HAP-1 (cell line): ENCODE measurements at regions of chr19 and their contacts with region 1.

Region 1: DNA sequence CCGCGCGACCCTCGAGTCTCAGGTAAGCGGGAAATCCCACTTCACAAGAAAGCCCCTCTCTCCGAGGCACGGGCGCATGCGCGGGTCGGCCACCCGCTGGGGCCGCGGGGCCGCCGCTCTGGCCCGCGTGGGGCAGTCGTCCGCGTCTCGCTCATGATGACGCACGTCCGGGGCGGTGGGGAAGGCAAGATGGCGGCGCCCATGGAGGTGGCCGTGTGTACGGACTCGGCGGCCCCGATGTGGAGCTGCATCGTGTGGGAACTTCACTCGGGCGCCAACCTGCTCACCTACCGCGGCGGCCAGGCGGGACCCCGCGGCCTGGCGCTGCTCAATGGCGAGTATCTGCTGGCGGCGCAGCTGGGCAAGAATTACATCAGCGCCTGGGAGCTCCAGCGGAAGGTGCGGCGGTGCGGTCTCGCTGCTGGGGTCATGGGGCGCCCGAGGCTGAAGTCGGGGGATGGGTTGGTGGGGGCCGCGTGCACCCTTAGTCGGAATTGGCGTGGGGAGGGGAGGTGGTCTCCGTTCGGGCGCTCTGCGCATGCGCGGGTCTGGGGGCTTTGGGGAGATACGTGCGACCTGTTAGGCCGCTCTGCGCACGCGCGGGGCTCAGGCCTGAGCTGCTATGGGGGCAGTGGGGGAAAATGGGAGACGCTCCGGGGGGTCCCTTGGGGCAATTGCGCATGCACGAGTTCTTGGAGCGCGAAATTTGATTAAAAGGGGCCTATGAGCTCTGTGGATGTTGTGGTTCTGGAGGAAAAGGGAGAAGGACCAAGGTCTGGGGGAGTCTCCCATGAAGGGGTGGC is at the start of gene WDR18:
- DNase-seq: peak; percentile 84 to 95
- H3K4me3 ChIP-seq: peak within 1 kb of the TSS; percentile 97
- H3K4me1 ChIP-seq: peaks cover 9% of the 10 kb centered on the region
- H3K27me3 ChIP-seq: no peaks in the 10 kb centered on the region

Region 2: DNA sequence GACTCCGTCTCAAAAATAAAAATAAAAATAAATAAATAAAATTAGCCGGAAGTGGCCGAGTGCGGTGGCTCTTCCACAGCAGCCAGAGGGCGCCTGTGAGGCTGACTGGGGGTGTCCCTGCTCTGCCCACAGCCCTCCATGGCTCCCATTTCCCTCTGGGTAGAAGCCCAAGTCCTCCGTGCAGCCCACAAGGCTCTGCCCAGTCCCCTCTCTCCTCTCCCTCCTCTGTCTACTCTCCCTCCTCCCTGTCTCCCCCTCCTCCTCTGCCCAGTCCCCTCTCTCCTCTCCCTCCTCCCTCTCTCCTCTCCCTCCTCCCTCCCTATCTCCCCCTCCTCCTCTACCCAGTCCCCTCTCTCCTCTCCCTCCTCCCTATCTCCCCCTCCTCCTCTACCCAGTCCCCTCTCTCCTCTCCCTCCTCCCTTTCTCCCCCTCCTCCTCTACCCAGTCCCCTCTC is 213.0 kb before region 1 on chr19:
- in situ Hi-C with region 1: loop called (anchors 10 kb)
- DNase-seq: peak; percentile 33 to 80
- H3K4me3 ChIP-seq: no peak overlapping the region
- H3K4me1 ChIP-seq: peaks cover 3% of the 10 kb centered on the region
- H3K27me3 ChIP-seq: no peaks in the 10 kb centered on the region